ENCODE measurements at regions of chr1 and their contacts with region 1.

Region 1: GRCh38 chr1:246447501-246447900 is 59.6 kb downstream of the SMYD3 start:
- DNase-seq: no peak
- H3K4me3 ChIP-seq: no peak overlapping the region
- H3K4me3 Mint-ChIP-seq: no peak overlapping the region
- H3K27ac ChIP-seq: no peak overlapping the region
- H3K27ac Mint-ChIP-seq: no peak overlapping the region
- H3K4me1 ChIP-seq: no peaks in the 10 kb centered on the region
- H3K4me1 Mint-ChIP-seq: peaks cover 3% of the 10 kb centered on the region
- H3K27me3 ChIP-seq: no peaks in the 10 kb centered on the region
- H3K27me3 Mint-ChIP-seq: no peaks in the 10 kb centered on the region
- CTCF ChIP-seq: no peak

Region 2: GRCh38 chr1:245156081-245156735 is 1291.3 kb before region 1 on chr1:
- intact Hi-C with region 1: loop called in 1 of 2 experiments (anchors 10 kb)
- DNase-seq: peak; percentile 50 to 68 (median 61)
- H3K4me3 ChIP-seq: peak overlapping the region; percentile 37 to 73 (median 39)
- H3K4me3 Mint-ChIP-seq: peak overlapping the region; percentile 77 to 92
- H3K27ac ChIP-seq: no peak overlapping the region
- H3K27ac Mint-ChIP-seq: peak overlapping the region in 1 of 7 donors; percentile 28
- H3K4me1 ChIP-seq: peaks cover 34 to 44% of the 10 kb centered on the region in 2 donors
- H3K4me1 Mint-ChIP-seq: peaks cover 29% of the 10 kb centered on the region
- H3K27me3 ChIP-seq: peaks cover 76 to 89% of the 10 kb centered on the region in 2 donors
- H3K27me3 Mint-ChIP-seq: peaks cover 70 to 98% (median 70%) of the 10 kb centered on the region in 3 donors
- CTCF ChIP-seq: peak; percentile 81

Region 3: DNA sequence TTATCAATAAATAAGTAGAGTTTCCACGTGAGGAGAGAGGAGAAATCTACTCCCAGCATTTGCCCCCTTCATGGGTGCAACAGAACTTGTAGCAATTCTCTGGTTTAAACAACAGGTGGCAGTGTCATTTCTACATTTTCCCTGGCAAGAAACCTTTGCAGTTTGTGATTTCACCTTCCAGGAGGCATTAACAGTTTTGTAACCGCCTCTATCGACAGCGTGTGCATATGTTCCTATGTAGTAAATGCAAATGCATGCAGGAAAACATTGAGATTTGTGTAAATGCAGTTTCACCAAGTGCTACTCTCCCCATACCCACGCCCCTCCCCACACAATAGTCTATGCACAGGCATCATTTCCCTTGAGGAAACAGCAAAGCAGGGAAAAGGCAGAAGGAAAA is 435.2 kb before region 1 on chr1:
- intact Hi-C with region 1: loop called in 1 of 2 experiments (anchors 5 kb)
- DNase-seq: peak; percentile 12 to 30 (median 25)
- H3K4me3 ChIP-seq: no peak overlapping the region
- H3K4me3 Mint-ChIP-seq: no peak overlapping the region
- H3K27ac ChIP-seq: no peak overlapping the region
- H3K27ac Mint-ChIP-seq: no peak overlapping the region
- H3K4me1 ChIP-seq: peaks cover 0 to 3% of the 10 kb centered on the region in 2 donors
- H3K4me1 Mint-ChIP-seq: peaks cover 5% of the 10 kb centered on the region
- H3K27me3 ChIP-seq: no peaks in the 10 kb centered on the region
- H3K27me3 Mint-ChIP-seq: peaks cover 0 to 3% (median 0%) of the 10 kb centered on the region in 3 donors
- CTCF ChIP-seq: peak; percentile 78

Region 4: DNA sequence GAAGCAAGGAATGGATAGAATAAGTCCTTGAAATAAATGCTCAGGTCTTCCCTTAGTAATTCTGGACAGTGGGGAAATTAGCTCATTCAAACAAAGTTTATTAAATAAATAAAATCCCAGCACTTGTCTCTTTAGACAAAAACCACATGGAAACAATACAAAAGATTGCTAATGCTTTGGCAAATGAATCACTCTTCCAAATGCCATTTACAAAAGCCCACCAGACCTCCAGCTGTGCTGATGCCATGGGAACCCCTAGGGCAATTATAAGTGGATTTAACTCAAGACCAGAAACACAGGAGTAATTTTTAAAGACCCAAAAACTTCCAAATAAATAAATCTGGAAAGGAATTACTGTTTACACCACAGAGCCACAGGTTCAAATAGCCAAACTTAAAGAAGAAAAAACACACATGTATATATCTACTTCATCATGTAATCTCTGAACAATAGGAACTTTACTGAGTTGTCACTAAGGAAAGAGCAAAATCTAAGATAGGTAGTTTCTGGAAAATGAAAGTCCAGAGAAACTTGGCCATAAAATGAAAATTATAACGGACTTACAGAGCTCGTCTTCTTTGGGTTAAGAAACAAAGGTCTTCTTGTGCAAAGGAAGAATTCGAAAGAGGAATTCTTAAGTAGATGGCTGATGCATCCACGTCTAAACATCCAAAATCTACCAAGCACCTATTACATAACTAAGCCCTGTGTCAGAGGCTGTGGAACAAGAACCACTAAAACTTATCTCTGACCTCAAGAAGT is 339.8 kb before region 1 on chr1:
- intact Hi-C with region 1: no loop called
- DNase-seq: no peak
- H3K4me3 ChIP-seq: no peak overlapping the region
- H3K4me3 Mint-ChIP-seq: no peak overlapping the region
- H3K27ac ChIP-seq: no peak overlapping the region
- H3K27ac Mint-ChIP-seq: no peak overlapping the region
- H3K4me1 ChIP-seq: peaks cover 43 to 46% of the 10 kb centered on the region in 2 donors
- H3K4me1 Mint-ChIP-seq: peaks cover 62% of the 10 kb centered on the region
- H3K27me3 ChIP-seq: no peaks in the 10 kb centered on the region
- H3K27me3 Mint-ChIP-seq: peaks cover 0 to 2% (median 0%) of the 10 kb centered on the region in 3 donors
- CTCF ChIP-seq: no peak